ENCODE measurements at regions of chr2 and their contacts with region 1.

Region 1: DNA sequence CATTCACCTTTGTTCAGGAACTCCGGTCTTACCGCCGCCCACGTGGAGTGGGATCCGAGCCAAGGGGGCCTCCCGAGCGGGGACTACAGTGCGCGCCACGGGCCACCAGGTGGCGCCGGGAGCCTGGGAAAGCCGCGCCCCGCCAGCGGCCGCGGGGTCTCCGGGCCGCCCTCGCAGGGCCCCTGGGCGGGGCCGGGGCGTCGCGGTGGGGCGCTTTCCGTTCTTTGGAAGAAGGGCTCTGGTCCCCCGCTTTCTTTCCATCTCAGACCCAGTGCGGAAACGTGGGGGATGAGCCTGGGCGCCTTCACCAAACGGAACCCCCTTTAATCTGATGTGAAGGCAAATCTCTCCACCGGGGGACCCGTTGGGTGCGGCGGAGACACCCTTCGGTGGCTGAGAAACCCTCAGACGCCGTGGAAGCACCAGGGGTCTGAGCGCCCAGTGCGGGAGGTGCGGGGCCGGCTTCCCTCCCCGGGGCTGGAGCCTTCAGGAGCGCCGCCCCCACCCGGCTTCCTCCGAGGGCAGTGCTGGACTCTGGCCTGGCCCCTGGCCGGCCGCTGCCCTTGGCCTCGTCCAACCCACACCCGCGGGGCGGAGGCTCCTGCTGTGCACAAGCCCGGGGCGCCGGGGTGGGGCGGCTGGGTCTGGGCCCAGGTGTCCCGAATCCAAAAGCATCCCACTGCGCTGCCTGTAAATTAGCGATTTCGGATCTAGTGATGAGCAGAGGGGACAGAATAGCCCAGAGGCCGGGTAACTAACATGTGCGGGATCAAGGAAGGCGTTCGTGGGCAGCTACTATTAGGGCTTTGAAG is 44.6 kb downstream of the GORASP2 start:
- DNase-seq: peak; percentile 91
- H3K4me3 Mint-ChIP-seq: peak overlapping the region; percentile 72
- H3K27ac Mint-ChIP-seq: peak overlapping the region; percentile 42
- H3K4me1 Mint-ChIP-seq: peaks cover 14% of the 10 kb centered on the region
- H3K27me3 Mint-ChIP-seq: no peaks in the 10 kb centered on the region

Region 2: GRCh38 chr2:171086352-171087290 is 112.9 kb after region 1 on chr2:
- CTCF ChIA-PET with region 1: interaction called, 42 read pairs
- POLR2A ChIA-PET with region 1: interaction called, 3 read pairs
- intact Hi-C with region 1: loop called (anchors 1 kb)
- DNase-seq: peak; percentile 66
- H3K4me3 Mint-ChIP-seq: peak overlapping the region; percentile 64
- H3K27ac Mint-ChIP-seq: peak overlapping the region; percentile 43
- H3K4me1 Mint-ChIP-seq: peaks cover 58% of the 10 kb centered on the region
- H3K27me3 Mint-ChIP-seq: no peaks in the 10 kb centered on the region

Region 3: DNA sequence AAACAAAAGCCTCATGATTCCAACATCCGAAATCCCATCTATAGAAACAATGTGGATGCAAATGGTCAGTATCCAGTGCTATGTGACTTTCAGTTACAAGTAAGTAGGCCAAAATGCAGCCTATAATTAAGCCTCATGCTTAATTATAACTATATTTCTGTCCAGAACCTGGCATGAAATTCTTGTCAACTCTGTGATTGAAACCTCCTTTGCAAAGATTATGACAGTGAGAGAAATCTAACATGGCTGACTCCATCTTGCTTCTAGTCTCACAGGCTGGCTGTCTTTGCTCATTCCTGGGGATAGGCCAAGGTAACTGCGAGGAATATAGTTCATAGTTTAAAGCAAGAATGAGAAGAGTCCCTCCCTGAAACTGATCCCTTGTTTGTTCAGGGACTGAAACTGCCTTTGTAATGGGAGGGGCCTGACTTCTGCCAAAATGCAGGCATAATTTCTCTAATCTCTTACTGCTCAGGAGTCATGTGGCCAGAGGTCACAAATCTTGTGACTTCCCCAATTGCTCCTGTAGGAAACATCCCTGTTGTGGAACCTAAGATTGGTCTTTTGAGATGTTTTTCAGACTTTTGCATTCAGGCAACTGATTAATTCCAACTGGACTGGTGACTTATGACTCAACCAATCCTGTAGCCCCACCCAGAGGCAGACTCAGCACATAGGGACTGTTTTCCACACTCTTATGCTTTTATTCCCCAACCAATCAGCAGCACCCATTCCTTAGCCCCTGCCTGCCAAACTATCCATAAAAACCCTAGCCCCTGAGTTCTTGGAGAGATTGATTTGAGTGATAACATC is 271.5 kb after region 1 on chr2:
- CTCF ChIA-PET with region 1: interaction called, 3 read pairs
- POLR2A ChIA-PET with region 1: no interaction called
- intact Hi-C with region 1: loop called (anchors 2 kb)
- DNase-seq: peak; percentile 13
- H3K4me3 Mint-ChIP-seq: no peak overlapping the region
- H3K27ac Mint-ChIP-seq: no peak overlapping the region
- H3K4me1 Mint-ChIP-seq: peaks cover 50% of the 10 kb centered on the region
- H3K27me3 Mint-ChIP-seq: no peaks in the 10 kb centered on the region

Region 4: GRCh38 chr2:171433763-171434670 is 460.3 kb after region 1 on chr2 and contains the starts of genes DCAF17 and METTL8:
- CTCF ChIA-PET with region 1: interaction called, 6 read pairs
- POLR2A ChIA-PET with region 1: no interaction called
- intact Hi-C with region 1: loop called (anchors 1 kb)
- DNase-seq: peak; percentile 96
- H3K4me3 Mint-ChIP-seq: peak within 1 kb of the TSS; percentile 92
- H3K27ac Mint-ChIP-seq: peak within 1 kb of the TSS; percentile 92
- H3K4me1 Mint-ChIP-seq: peaks cover 57% of the 10 kb centered on the region
- H3K27me3 Mint-ChIP-seq: no peaks in the 10 kb centered on the region
- total RNA-seq, gene DCAF17: 14.1 to 14.7 TPM
- total RNA-seq, gene METTL8: 33.3 to 40.9 TPM